ENCODE measurements at regions of chr15 and their contacts with region 1.

Region 1: GRCh38 chr15:81265944-81266775 is 57.8 kb downstream of the STARD5 start:
- DNase-seq: peak; percentile 80
- ATAC-seq: peak; percentile 91
- H3K4me3 ChIP-seq: no peak overlapping the region
- H3K27ac ChIP-seq: no peak overlapping the region
- H3K4me1 ChIP-seq: peaks cover 7% of the 10 kb centered on the region
- H3K27me3 ChIP-seq: no peaks in the 10 kb centered on the region
- CTCF ChIP-seq: peak; percentile 97
- POLR2A ChIP-seq: no peak
- RAD21 ChIP-seq: peak; percentile 97

Region 2: DNA sequence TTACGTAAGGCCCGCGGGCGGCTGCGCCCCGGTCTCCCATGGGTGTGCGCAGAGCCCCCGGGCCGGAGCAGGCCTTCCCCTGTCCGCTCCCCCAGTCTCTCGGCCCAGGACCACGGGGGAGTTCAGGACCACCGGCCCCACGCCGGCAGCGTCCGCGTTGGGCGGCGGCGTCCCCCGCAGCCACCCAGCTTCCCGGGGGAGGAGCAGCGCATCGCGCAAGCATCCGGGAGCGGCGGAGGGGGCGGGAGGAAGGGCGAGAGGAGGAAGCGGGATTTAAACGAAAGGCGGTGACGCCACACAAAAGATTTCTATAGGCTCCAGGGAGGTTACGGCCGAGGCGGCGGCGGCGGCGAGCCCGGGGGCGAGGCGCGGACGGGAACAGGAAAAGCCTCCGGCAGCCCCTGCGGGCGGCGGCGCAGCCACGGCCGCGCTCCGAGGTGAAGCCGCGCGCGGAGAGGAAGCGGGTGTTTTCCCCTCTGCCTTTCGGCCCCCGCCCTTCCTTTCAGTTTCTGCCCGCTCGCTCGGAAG is 265.5 kb before region 1 on chr15 and contains the start of gene TLNRD1:
- CTCF ChIA-PET with region 1: no interaction called
- POLR2A ChIA-PET with region 1: no interaction called
- dilution Hi-C with region 1: no loop called
- in situ Hi-C with region 1: loop called (anchors 10 kb)
- intact Hi-C with region 1: loop called (anchors 2 kb)
- DNase-seq: peak; percentile 92
- ATAC-seq: peak; percentile 84
- H3K4me3 ChIP-seq: peak within 1 kb of the TSS; percentile 89
- H3K27ac ChIP-seq: peak within 1 kb of the TSS; percentile 86
- H3K4me1 ChIP-seq: peaks cover 13% of the 10 kb centered on the region
- H3K27me3 ChIP-seq: no peaks in the 10 kb centered on the region
- CTCF ChIP-seq: no peak
- POLR2A ChIP-seq: peak; percentile 91
- RAD21 ChIP-seq: no peak
- total RNA-seq, gene TLNRD1: 2.2 and 2.8 TPM in 2 replicates

Region 3: DNA sequence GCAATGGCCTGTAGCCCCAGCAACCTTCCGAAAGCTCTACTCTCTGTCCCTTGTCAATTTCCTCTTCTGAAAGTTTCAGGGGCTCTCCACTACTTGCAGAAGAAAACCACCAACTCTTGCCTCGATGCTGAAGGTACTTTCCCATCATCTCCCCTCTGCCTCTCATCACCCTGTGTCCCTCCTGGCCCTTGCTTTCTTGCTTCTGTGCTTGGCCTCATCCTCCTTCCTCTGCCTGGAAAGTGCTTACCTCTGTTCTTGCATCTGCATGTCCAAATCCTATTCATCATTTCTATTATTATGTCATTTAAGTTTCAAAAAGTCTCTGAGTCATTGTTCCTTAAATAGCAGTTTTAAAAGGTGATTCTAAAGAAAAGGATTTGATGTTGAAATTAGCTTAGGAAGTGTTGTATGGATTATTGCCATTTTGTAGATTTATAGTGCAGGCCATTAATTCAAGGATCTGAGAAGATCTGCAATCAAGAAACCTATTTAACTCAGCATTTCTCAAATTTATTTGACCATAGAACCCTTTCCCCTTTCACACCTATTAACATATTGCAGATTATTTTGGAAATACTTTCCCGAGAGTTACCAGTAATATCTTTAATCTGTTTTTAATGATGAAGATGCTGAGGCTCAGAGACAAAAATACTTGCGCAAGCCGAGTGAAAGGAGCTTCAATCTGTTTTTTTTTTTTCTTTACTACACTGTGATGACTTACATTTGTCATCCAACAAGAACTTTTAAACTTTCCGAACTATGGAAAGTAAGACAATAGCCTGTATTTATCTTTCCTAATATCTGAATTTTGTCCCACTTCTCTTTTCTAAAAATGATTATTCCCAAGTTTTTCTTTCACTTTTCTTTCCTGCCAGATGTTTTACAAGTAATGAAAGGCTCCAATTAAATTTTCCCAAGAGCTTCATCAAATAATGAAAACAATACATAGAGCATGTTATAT is 154.4 kb before region 1 on chr15:
- CTCF ChIA-PET with region 1: interaction called, 55 read pairs
- POLR2A ChIA-PET with region 1: interaction called, 3 read pairs
- dilution Hi-C with region 1: no loop called
- in situ Hi-C with region 1: loop called (anchors 5 kb)
- intact Hi-C with region 1: loop called (anchors 1 kb)
- DNase-seq: no peak
- ATAC-seq: no peak
- H3K4me3 ChIP-seq: no peak overlapping the region
- H3K27ac ChIP-seq: no peak overlapping the region
- H3K4me1 ChIP-seq: peaks cover 13% of the 10 kb centered on the region
- H3K27me3 ChIP-seq: no peaks in the 10 kb centered on the region
- CTCF ChIP-seq: no peak
- POLR2A ChIP-seq: no peak
- RAD21 ChIP-seq: no peak

Region 4: DNA sequence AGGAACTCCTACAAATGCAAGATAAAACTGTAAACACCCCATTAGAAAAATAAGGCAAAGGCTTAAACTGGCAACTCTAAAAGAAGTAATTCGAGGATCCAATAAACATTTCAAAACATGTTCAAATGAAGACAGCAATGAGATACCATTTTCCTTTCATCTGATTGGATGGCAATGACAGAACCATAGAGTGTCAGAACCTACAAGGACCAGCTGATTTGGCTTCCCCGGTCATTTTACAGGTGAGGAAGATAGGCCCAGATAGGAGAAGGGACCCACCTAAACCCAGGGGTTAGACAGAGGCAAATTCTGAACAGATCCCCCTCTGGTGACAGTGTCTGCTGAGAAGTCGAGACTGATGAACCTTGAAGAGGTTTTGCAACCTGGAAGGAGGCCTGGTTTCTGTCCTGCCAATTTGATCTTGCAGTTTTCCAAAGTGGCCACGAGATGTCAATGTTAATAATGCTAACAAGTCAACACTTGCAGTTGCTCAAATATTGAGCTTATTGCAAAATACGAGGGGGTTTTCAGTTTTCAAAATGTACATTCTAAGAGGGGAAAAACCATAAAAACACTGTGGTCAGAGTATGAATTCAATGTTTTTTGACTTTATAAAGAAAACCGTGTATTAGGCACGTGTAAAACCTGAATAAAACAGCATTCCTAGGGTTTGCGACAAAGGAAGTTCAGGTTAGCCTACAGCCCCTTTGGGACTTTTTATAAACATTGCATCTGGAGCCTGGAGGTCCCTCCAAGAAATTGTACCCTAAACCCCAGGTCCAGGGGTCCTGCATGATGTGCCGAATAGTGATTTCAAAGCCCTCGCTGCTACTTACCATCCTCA is 110.6 kb before region 1 on chr15:
- CTCF ChIA-PET with region 1: interaction called, 117 read pairs
- POLR2A ChIA-PET with region 1: no interaction called
- dilution Hi-C with region 1: no loop called
- in situ Hi-C with region 1: loop called (anchors 5 kb)
- intact Hi-C with region 1: loop called (anchors 1 kb)
- DNase-seq: peak; percentile 77
- ATAC-seq: peak; percentile 64
- H3K4me3 ChIP-seq: no peak overlapping the region
- H3K27ac ChIP-seq: peak overlapping the region; percentile 21; the same call in 1 of the 2 replicates
- H3K4me1 ChIP-seq: peaks cover 19% of the 10 kb centered on the region
- H3K27me3 ChIP-seq: no peaks in the 10 kb centered on the region
- CTCF ChIP-seq: peak; percentile 80
- POLR2A ChIP-seq: no peak
- RAD21 ChIP-seq: peak; percentile 86

Region 5: GRCh38 chr15:81182756-81183438 is 83.3 kb before region 1 on chr15:
- CTCF ChIA-PET with region 1: interaction called, 11 read pairs
- POLR2A ChIA-PET with region 1: no interaction called
- dilution Hi-C with region 1: no loop called
- in situ Hi-C with region 1: no loop called
- intact Hi-C with region 1: no loop called
- DNase-seq: no peak
- ATAC-seq: peak; percentile 69
- H3K4me3 ChIP-seq: peak overlapping the region; percentile 43
- H3K27ac ChIP-seq: peak overlapping the region; percentile 92
- H3K4me1 ChIP-seq: peaks cover 23% of the 10 kb centered on the region
- H3K27me3 ChIP-seq: no peaks in the 10 kb centered on the region
- CTCF ChIP-seq: no peak
- POLR2A ChIP-seq: no peak
- RAD21 ChIP-seq: no peak

Region 6: DNA sequence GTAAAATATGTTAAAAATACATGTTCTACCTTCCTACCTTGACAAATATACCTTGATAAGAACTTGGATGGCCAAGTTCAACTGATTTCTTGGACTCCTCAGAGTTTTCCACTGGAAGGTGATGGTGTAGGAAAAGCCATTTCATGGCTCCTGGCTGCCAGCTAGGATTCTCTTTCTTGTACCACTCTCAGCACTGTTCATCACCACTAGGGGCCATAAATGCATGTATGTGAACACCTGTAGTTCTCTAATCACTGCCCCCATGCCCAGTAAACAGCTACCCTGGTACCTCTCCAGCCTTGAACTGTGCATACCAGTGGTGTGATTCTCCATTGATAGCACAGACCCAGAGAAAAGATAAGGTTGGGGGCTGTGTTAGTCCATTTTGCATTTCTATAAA is 31.3 kb before region 1 on chr15:
- CTCF ChIA-PET with region 1: no interaction called
- POLR2A ChIA-PET with region 1: no interaction called
- dilution Hi-C with region 1: no loop called
- in situ Hi-C with region 1: no loop called
- intact Hi-C with region 1: no loop called
- DNase-seq: no peak
- ATAC-seq: no peak
- H3K4me3 ChIP-seq: no peak overlapping the region
- H3K27ac ChIP-seq: no peak overlapping the region
- H3K4me1 ChIP-seq: peaks cover 6% of the 10 kb centered on the region
- H3K27me3 ChIP-seq: no peaks in the 10 kb centered on the region
- CTCF ChIP-seq: no peak
- POLR2A ChIP-seq: no peak
- RAD21 ChIP-seq: no peak